Testis (tissue), 5 donors: ENCODE measurements at regions of chr6 and their contacts with region 1.

Region 1: DNA sequence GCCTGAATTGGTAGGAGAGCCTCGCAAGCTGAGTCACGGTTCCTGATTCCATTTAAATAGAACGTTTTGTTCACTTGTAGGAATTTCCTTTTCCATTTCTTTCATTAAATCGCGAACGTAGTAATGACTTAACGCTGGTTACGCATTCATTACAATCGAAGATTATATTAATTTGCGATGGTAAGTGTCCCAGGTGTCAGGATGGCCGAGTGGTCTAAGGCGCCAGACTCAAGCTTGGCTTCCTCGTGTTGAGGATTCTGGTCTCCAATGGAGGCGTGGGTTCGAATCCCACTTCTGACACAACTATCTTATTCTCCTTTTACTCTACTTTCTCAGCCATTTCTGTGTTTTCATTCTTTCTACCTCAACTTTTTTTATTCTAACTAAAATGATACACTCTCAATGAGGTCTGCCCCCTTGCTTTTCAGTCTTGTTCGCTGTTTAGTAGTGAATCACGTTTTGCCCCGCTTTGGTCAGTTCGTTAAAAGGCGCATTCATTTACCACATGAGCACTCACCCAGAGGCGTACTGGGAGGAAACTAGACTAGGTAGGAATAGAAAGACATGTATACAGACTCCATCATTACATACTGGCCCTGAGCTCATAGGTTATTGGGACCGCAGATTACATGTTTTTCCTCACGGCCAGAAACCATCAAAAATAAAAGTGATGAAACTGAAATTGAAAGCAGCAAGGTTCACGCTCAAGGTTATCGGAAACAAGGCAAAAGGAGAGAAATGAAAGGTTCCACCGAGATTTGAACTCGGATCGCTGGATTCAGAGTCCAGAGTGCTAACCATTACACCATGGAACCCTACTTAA is 17.3 kb upstream of the TRIM27 start:
- DNase-seq: peak; percentile 89
- H3K4me3 ChIP-seq: peak overlapping the region; percentile 64 to 77
- H3K27ac ChIP-seq: peak overlapping the region; percentile 74 to 87
- H3K4me1 ChIP-seq: peaks cover 10% of the 10 kb centered on the region
- H3K27me3 ChIP-seq: no peaks in the 10 kb centered on the region
- CTCF ChIP-seq: no peak
- POLR2A ChIP-seq: no peak

Region 2: GRCh38 chr6:28981833-28982475 is 40.9 kb after region 1 on chr6:
- intact Hi-C with region 1: loop called (anchors 5 kb)
- DNase-seq: peak; percentile 85
- H3K4me3 ChIP-seq: peak overlapping the region; percentile 68 to 72
- H3K27ac ChIP-seq: peak overlapping the region; percentile 74 to 87
- H3K4me1 ChIP-seq: no peaks in the 10 kb centered on the region
- H3K27me3 ChIP-seq: no peaks in the 10 kb centered on the region
- CTCF ChIP-seq: peak in 1 of 3 experiments; percentile 23
- POLR2A ChIP-seq: no peak